ENCODE measurements at regions of chr3 and their contacts with region 1.

Region 1: DNA sequence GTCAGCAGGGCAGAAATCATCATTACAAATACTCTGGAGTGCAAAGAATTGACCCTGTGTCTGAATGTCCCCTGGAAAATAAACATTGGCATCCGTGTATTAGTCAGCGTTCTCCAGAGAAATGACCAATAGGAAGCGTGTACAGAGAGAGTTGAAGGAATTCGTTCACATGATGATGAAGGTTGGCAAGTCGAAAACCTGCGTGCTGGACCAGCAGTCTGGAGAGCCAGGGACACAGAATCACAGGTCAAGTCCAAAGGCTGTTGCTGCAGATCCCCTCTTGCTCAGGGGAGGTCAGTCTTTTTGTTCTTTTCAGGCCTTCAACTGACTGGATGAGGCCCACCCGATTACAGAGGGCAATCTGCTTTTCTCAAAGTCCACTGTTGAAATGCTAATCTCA is 16.6 kb downstream of the GP9 start:
- DNase-seq: peak; percentile 77
- ATAC-seq: peak; percentile 88
- H3K4me3 ChIP-seq: no peak overlapping the region
- H3K27ac ChIP-seq: no peak overlapping the region
- H3K4me1 ChIP-seq: peaks cover 21% of the 10 kb centered on the region
- H3K27me3 ChIP-seq: no peaks in the 10 kb centered on the region; a peak in 2 of 5 replicates
- CTCF ChIP-seq: peak; percentile 25; the same call in 1 of the 2 replicates
- EP300 ChIP-seq: no peak
- POLR2A ChIP-seq: no peak
- RAD21 ChIP-seq: no peak

Region 2: DNA sequence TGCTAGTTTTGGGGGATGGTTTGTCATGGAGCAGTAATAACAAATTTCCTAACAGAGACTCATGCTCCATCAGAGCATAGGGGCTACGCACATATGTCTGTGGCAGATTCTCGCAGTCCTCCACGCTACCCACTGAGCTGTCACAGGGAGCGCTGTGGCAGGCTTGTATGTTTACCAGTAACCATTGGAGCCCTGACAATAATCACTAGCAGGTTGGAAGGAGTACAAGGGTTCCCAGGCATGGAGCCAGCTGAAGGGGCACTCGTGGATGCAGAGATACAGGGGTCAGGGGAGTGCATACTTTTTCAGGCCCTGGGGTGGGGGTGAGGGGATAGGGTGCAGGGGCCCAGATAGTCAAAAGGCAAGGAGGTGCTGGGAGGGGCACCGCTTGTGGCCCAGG is 24.5 kb before region 1 on chr3:
- CTCF ChIA-PET with region 1: no interaction called
- POLR2A ChIA-PET with region 1: no interaction called
- in situ Hi-C with region 1: no loop called
- intact Hi-C with region 1: loop called (anchors 1 kb)
- DNase-seq: no peak
- ATAC-seq: no peak
- H3K4me3 ChIP-seq: no peak overlapping the region
- H3K27ac ChIP-seq: no peak overlapping the region
- H3K4me1 ChIP-seq: peaks cover 52% of the 10 kb centered on the region
- H3K27me3 ChIP-seq: 0 out of 5 replicates have a peak, but pooled peaks cover 0 to 9% of the 10 kb centered on the region in 2 experiments
- CTCF ChIP-seq: no peak
- EP300 ChIP-seq: no peak
- POLR2A ChIP-seq: no peak
- RAD21 ChIP-seq: no peak

Measured in HepG2 (cell line).